CD8-positive, alpha-beta T cell (primary cell): ENCODE measurements at regions of chr4 and their contacts with region 1.

Region 1: DNA sequence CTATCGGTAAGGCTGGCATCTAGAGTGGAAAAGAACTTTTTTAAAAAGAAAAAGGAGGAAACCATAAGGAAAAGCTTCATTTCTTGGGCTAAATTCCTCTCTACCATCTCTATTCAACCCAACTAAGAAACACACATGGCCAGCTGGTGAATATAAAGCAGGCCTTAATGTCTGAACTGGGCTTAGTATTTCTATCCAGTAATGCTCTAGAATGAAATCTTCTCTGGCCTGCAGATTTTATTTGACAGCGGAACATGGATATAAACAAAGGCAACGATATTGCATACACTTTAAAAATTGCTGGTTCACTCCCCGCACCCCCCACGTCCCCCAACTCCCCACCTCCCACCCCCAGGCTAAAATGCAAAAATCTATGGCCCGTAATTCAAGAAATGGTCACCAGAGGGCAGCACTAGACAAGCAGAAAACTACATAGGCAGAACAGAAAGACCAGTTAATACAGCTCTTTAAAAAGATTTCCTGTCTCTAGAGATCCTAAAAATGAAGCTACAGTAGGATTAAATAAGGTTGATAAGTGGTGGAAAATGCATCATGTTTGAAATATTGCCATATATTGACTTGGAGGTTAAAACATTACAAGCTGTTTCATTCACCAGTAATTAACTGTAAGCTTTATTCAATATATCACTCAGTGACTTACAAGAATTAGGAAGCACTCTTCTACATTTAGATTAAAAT is 155.2 kb upstream of the GALNT7 start:
- DNase-seq: peak in 8 of 9 experiments; percentile 20 to 63 (median 54)
- ATAC-seq: peak; percentile 63
- H3K4me3 ChIP-seq: no peak overlapping the region
- H3K4me3 Mint-ChIP-seq: no peak overlapping the region
- H3K27ac ChIP-seq: no peak overlapping the region
- H3K27ac Mint-ChIP-seq: no peak overlapping the region
- H3K4me1 ChIP-seq: no peaks in the 10 kb centered on the region
- H3K4me1 Mint-ChIP-seq: no peaks in the 10 kb centered on the region
- H3K27me3 ChIP-seq: no peaks in the 10 kb centered on the region
- H3K27me3 Mint-ChIP-seq: peaks cover 3% of the 10 kb centered on the region
- CTCF ChIP-seq: peak; percentile 76

Region 2: GRCh38 chr4:173025131-173025530 is 11.8 kb after region 1 on chr4:
- CTCF ChIA-PET with region 1: interaction called, 39 read pairs
- POLR2A ChIA-PET with region 1: no interaction called
- intact Hi-C with region 1: no loop called
- DNase-seq: peak in 3 of 9 experiments; percentile 16 to 61 (median 42)
- ATAC-seq: peak; percentile 44
- H3K4me3 ChIP-seq: no peak overlapping the region
- H3K4me3 Mint-ChIP-seq: no peak overlapping the region
- H3K27ac ChIP-seq: no peak overlapping the region
- H3K27ac Mint-ChIP-seq: no peak overlapping the region
- H3K4me1 ChIP-seq: no peaks in the 10 kb centered on the region
- H3K4me1 Mint-ChIP-seq: peaks cover 4% of the 10 kb centered on the region
- H3K27me3 ChIP-seq: no peaks in the 10 kb centered on the region
- H3K27me3 Mint-ChIP-seq: peaks cover 2% of the 10 kb centered on the region
- CTCF ChIP-seq: peak; percentile 51

Region 3: GRCh38 chr4:173252024-173252935 is 238.9 kb after region 1 on chr4:
- CTCF ChIA-PET with region 1: interaction called, 71 read pairs
- POLR2A ChIA-PET with region 1: no interaction called
- intact Hi-C with region 1: loop called (anchors 1 kb)
- DNase-seq: peak in 1 of 9 experiments; percentile 5
- ATAC-seq: no peak
- H3K4me3 ChIP-seq: no peak overlapping the region
- H3K4me3 Mint-ChIP-seq: no peak overlapping the region
- H3K27ac ChIP-seq: no peak overlapping the region
- H3K27ac Mint-ChIP-seq: no peak overlapping the region
- H3K4me1 ChIP-seq: no peaks in the 10 kb centered on the region
- H3K4me1 Mint-ChIP-seq: peaks cover 11% of the 10 kb centered on the region
- H3K27me3 ChIP-seq: no peaks in the 10 kb centered on the region
- H3K27me3 Mint-ChIP-seq: no peaks in the 10 kb centered on the region
- CTCF ChIP-seq: no peak

Region 4: GRCh38 chr4:173264684-173265185 is 251.4 kb after region 1 on chr4:
- CTCF ChIA-PET with region 1: interaction called, 34 read pairs
- POLR2A ChIA-PET with region 1: no interaction called
- intact Hi-C with region 1: no loop called
- DNase-seq: peak in 7 of 9 experiments; percentile 8 to 53 (median 27)
- ATAC-seq: peak; percentile 59
- H3K4me3 ChIP-seq: no peak overlapping the region
- H3K4me3 Mint-ChIP-seq: no peak overlapping the region
- H3K27ac ChIP-seq: no peak overlapping the region
- H3K27ac Mint-ChIP-seq: no peak overlapping the region
- H3K4me1 ChIP-seq: peaks cover 20% of the 10 kb centered on the region
- H3K4me1 Mint-ChIP-seq: peaks cover 35% of the 10 kb centered on the region
- H3K27me3 ChIP-seq: no peaks in the 10 kb centered on the region
- H3K27me3 Mint-ChIP-seq: no peaks in the 10 kb centered on the region
- CTCF ChIP-seq: no peak

Region 5: GRCh38 chr4:173301518-173302201 is 288.3 kb after region 1 on chr4:
- CTCF ChIA-PET with region 1: interaction called, 63 read pairs
- POLR2A ChIA-PET with region 1: no interaction called
- intact Hi-C with region 1: loop called (anchors 1 kb)
- DNase-seq: peak in 2 of 9 experiments; percentile 37 to 48
- ATAC-seq: peak; percentile 51
- H3K4me3 ChIP-seq: no peak overlapping the region
- H3K4me3 Mint-ChIP-seq: no peak overlapping the region
- H3K27ac ChIP-seq: no peak overlapping the region
- H3K27ac Mint-ChIP-seq: peak overlapping the region; percentile 4
- H3K4me1 ChIP-seq: no peaks in the 10 kb centered on the region
- H3K4me1 Mint-ChIP-seq: no peaks in the 10 kb centered on the region
- H3K27me3 ChIP-seq: no peaks in the 10 kb centered on the region
- H3K27me3 Mint-ChIP-seq: no peaks in the 10 kb centered on the region
- CTCF ChIP-seq: peak; percentile 90

Region 6: GRCh38 chr4:173494013-173494970 is 480.9 kb after region 1 on chr4:
- CTCF ChIA-PET with region 1: interaction called, 4 read pairs
- POLR2A ChIA-PET with region 1: no interaction called
- intact Hi-C with region 1: loop called in 1 of 2 experiments (anchors 10 kb)
- DNase-seq: peak in 8 of 9 experiments; percentile 29 to 80 (median 54)
- ATAC-seq: peak; percentile 92
- H3K4me3 ChIP-seq: peak overlapping the region; percentile 40 to 42
- H3K4me3 Mint-ChIP-seq: peak overlapping the region; percentile 77
- H3K27ac ChIP-seq: no peak overlapping the region
- H3K27ac Mint-ChIP-seq: no peak overlapping the region
- H3K4me1 ChIP-seq: peaks cover 4% of the 10 kb centered on the region
- H3K4me1 Mint-ChIP-seq: peaks cover 7% of the 10 kb centered on the region
- H3K27me3 ChIP-seq: no peaks in the 10 kb centered on the region
- H3K27me3 Mint-ChIP-seq: peaks cover 40% of the 10 kb centered on the region
- CTCF ChIP-seq: peak; percentile 55